ENCODE measurements at regions of chr3 and their contacts with region 1.

Region 1: DNA sequence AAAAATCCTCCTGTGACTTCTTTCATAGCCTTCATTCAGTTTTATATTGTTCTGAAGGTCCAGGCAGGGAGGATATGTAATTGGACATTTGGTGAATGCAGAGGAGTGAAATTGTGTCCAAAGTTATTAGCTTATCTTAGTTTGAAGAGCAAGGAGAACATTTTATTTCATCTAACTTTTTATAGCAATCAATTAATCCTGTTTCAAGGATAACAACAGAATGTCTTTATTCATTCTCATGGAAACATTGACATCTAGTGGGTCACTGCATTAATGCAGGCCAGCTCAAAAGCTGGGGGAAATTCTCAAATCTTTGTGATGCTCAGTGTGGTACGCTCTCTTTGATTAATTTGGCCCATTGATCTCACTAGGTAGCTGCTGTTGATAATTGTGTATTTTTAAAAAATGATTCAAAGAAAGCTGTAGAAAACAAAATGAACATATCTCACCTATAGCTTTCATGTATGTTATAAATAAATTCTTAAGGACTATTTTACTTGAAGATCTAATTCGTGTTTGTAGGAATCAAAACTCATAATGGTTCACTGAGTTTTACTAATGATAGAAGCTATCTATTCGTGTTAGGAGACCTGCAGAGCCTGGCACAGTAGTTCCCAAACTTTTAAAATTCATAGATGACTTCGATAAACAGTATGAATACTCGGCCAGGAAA is 150.8 kb upstream of the KCNMB2 start:
- DNase-seq: peak; percentile 51
- ATAC-seq: peak; percentile 63
- H3K4me3 ChIP-seq: no peak overlapping the region
- H3K27ac ChIP-seq: no peak overlapping the region; the same call in 1 of the 2 replicates
- H3K4me1 ChIP-seq: peaks cover 4% of the 10 kb centered on the region
- H3K27me3 ChIP-seq: no peaks in the 10 kb centered on the region
- CTCF ChIP-seq: peak; percentile 90
- POLR2A ChIP-seq: no peak
- RAD21 ChIP-seq: peak; percentile 96

Region 2: DNA sequence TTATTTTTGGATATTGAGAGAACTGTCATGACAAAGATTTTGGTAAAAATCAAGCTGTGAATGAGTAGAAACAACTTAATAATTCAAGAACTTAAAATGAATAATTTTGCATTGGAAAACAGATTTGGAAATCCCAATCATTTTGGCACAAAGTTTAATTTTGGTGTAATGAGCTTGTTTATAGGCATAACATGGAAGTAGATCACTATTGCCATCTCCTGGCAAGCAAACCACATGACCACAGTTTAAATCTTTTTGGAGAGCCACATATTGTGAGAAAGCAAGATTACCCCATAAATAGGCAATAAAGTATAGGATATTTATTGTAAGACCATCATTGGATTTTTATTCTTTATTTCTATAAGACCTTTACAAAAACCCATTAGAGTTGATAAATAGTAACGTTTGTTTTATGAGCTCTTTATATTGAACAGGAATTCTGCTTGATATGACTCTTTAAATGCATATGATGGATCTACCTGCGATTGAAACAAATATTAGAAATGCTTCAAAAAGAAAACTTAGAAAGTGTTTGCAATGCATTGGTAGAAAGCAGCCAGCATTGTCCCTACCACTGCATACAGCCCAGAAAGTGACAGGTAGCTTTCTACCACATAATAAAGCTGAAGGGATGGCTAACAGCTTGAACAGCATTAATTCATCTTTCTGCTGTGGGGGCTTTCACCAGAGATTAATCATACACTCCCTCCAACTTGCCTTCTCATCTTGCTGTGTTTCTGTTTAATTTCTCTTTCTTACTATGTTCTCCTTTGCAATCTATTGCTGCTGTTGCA is 1955.0 kb before region 1 on chr3:
- CTCF ChIA-PET with region 1: no interaction called
- POLR2A ChIA-PET with region 1: no interaction called
- dilution Hi-C with region 1: no loop called
- in situ Hi-C with region 1: no loop called
- intact Hi-C with region 1: loop called (anchors 2 kb)
- DNase-seq: peak; percentile 76
- ATAC-seq: peak; percentile 91
- H3K4me3 ChIP-seq: no peak overlapping the region
- H3K27ac ChIP-seq: no peak overlapping the region
- H3K4me1 ChIP-seq: peaks cover 2% of the 10 kb centered on the region; the same call in 1 of the 2 replicates
- H3K27me3 ChIP-seq: no peaks in the 10 kb centered on the region
- CTCF ChIP-seq: peak; percentile 90
- POLR2A ChIP-seq: no peak
- RAD21 ChIP-seq: peak; percentile 90

Region 3: DNA sequence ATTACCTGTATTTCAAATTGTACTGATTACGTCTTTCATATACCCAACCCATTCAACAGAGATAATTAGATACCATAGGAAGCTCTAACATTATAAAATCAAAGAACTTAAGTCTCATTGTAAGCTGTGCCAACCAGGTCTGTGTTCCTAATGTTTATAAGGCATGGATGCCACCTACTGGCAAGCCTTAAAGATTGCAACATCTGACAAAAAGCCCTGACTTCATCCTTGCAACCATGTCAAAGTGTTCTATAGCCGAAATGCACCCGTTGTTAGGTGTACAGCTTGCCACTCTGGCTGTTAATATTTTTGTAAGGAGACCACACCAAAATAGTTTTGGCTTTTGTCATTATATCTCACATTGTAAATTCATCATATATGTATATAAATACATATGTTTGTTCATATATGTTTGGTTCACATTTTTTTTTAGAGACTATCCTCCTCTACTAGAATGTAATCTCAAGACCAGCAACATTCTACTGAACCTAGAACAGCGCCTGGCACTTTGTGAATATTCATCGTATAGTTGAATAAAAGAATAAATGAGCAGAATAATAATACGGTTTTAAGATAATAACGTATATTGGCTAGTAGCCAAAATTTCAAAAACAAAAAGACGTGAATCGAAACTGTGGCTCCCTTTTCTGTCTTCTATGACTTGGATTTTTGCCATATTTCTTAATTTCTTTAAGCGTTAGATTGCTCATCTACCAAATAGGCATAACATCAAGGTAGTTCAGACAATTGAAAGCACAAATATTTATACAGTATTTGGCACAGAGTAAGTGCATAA is 1446.2 kb before region 1 on chr3:
- CTCF ChIA-PET with region 1: no interaction called
- POLR2A ChIA-PET with region 1: no interaction called
- dilution Hi-C with region 1: no loop called
- in situ Hi-C with region 1: no loop called
- intact Hi-C with region 1: loop called (anchors 1 kb)
- DNase-seq: peak; percentile 86
- ATAC-seq: peak; percentile 90
- H3K4me3 ChIP-seq: no peak overlapping the region
- H3K27ac ChIP-seq: no peak overlapping the region
- H3K4me1 ChIP-seq: no peaks in the 10 kb centered on the region
- H3K27me3 ChIP-seq: no peaks in the 10 kb centered on the region
- CTCF ChIP-seq: peak; percentile 87
- POLR2A ChIP-seq: no peak
- RAD21 ChIP-seq: peak; percentile 85

Region 4: DNA sequence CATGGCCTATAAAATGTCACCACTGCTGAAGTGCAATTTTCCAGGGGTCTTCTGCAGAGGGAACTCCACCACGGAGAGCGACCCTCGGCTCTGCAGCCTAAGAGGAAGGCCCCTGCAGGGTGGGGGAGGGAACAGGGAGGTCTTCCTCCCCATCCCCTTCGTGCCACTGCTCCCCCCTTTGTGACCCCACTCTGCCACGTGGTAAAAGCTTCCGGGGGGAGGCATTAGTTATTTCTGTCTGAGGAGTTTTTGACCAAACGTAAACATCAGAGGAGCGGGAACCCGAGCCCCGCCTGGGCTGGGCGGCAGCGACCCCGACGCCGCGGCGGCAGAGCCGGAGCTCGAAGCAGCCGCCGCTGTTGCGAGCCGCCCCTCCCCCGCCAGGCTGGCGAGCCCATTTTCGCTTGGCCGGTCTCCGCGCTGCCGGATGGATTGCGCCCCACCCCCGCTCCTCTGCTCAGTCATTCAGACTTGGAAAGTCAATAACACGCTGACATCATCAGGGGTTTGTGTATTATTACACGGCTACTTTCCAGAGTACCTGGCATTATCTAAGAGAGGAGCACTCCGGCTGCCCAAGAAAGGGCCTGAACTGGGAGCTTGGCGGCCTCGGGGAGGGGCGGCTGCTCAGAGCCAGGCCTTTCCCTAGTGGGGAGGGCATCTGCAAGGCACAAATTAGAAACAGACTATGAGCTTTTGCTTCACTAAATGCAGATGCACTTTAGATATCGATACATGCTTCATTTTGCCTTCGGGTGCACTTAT is 1025.6 kb before region 1 on chr3:
- CTCF ChIA-PET with region 1: no interaction called
- POLR2A ChIA-PET with region 1: no interaction called
- dilution Hi-C with region 1: no loop called
- in situ Hi-C with region 1: no loop called
- intact Hi-C with region 1: loop called (anchors 1 kb)
- DNase-seq: peak; percentile 99
- ATAC-seq: peak; percentile 90
- H3K4me3 ChIP-seq: peak overlapping the region; percentile 5; the same call in 1 of the 2 replicates
- H3K27ac ChIP-seq: peak overlapping the region; percentile 59
- H3K4me1 ChIP-seq: peaks cover 27% of the 10 kb centered on the region
- H3K27me3 ChIP-seq: no peaks in the 10 kb centered on the region
- CTCF ChIP-seq: no peak
- POLR2A ChIP-seq: 0 out of 2 replicates have a peak, but pooled peaks have one; percentile 28
- RAD21 ChIP-seq: peak; percentile 71

Region 5: DNA sequence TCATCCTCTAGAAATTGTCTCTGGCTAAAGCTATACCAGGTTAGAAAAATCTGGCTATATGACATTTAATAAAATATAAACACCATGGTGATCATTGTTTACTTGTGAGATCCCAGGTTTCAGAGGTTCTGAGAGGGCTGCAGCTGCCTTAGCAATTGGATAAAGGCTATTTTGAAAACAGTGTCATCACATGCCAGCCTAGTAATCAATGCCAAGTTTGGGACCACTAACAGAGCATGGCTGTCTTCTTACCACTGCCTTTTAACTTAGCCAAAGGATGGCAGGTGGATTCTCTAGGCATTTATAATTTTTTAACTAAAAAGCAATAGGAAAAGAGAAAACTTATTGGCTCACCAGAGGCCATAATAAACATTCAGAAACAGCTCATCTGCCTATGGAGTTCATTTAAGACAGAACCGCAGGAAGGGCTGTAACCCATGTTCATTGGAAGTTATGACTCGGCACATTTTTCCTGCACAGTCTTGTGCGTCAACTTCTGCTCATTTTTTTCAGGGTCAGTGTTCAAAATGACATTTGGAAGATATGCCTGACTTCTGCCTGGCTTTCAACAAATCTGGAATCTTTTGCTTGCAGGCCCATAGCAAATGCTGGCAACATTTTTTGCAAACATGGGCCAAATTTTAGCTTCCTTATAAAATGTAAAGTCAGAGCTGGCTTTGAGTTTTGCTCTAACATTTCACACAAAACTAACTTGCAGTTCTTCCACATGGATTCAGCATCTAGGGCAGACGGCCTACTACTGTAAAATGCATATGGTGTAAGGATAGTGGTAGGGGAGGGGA is 712.1 kb before region 1 on chr3:
- CTCF ChIA-PET with region 1: no interaction called
- POLR2A ChIA-PET with region 1: no interaction called
- dilution Hi-C with region 1: no loop called
- in situ Hi-C with region 1: no loop called
- intact Hi-C with region 1: loop called (anchors 5 kb)
- DNase-seq: peak; percentile 97
- ATAC-seq: peak; percentile 99
- H3K4me3 ChIP-seq: no peak overlapping the region
- H3K27ac ChIP-seq: peak overlapping the region; percentile 77; the same call in 1 of the 2 replicates
- H3K4me1 ChIP-seq: peaks cover 12% of the 10 kb centered on the region
- H3K27me3 ChIP-seq: no peaks in the 10 kb centered on the region
- CTCF ChIP-seq: no peak
- POLR2A ChIP-seq: no peak
- RAD21 ChIP-seq: no peak

Region 6: DNA sequence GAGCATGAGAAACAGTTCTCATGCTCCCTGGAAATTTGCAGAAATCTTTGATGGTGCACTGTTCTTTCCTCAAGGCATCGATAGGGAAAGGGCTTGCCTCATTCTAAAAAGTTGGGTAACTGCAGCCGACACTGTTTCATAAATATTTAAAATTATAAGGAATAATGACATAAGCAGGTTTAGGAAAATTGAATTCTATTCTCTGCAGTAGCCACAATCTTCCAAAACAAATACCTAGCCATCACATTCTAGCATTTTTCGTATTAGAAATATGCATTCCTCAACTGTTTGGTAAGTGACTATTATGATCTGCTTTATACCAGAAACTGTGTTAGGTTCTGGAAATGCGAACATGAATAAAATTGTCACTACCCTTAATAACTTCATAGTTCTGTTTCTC is 348.7 kb before region 1 on chr3:
- CTCF ChIA-PET with region 1: no interaction called
- POLR2A ChIA-PET with region 1: no interaction called
- dilution Hi-C with region 1: no loop called
- in situ Hi-C with region 1: no loop called
- intact Hi-C with region 1: loop called (anchors 1 kb)
- DNase-seq: peak; percentile 78
- ATAC-seq: peak; percentile 94
- H3K4me3 ChIP-seq: no peak overlapping the region
- H3K27ac ChIP-seq: peak overlapping the region; percentile 58; the same call in 1 of the 2 replicates
- H3K4me1 ChIP-seq: peaks cover 5% of the 10 kb centered on the region; the same call in 1 of the 2 replicates
- H3K27me3 ChIP-seq: no peaks in the 10 kb centered on the region
- CTCF ChIP-seq: no peak
- POLR2A ChIP-seq: no peak
- RAD21 ChIP-seq: no peak

Region 7: DNA sequence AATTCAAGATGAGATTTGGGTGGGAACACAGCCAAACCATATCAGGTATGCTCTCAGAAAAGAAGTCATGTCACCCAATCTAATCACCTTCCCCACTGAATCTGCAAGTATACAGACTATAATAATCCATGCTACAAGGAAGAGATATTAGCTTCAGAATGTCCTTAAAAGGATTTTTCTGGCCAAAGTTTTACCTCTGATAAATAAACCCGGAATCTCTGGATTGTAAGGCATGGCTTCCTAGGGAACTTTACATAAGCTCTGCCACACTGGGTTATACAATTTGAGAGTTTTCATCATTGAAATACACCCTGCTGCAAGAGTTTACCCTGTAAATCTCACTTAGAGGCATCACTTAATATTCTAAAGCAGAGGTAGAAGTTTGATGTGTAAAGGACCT is 179.7 kb before region 1 on chr3:
- CTCF ChIA-PET with region 1: no interaction called
- POLR2A ChIA-PET with region 1: no interaction called
- dilution Hi-C with region 1: no loop called
- in situ Hi-C with region 1: no loop called
- intact Hi-C with region 1: no loop called
- DNase-seq: peak; percentile 51
- ATAC-seq: peak; percentile 74
- H3K4me3 ChIP-seq: no peak overlapping the region
- H3K27ac ChIP-seq: peak overlapping the region; percentile 48; the same call in 1 of the 2 replicates
- H3K4me1 ChIP-seq: peaks cover 7% of the 10 kb centered on the region
- H3K27me3 ChIP-seq: no peaks in the 10 kb centered on the region
- CTCF ChIP-seq: no peak
- POLR2A ChIP-seq: no peak
- RAD21 ChIP-seq: no peak

Measured in IMR-90 (cell line).